Endothelial cell of umbilical vein (primary cell): ENCODE measurements at regions of chr6 and their contacts with region 1.

Region 1: GRCh38 chr6:80457439-80457933 is 351.0 kb downstream of the BCKDHB start:
- DNase-seq: peak; percentile 94
- H3K4me3 ChIP-seq: no peak overlapping the region
- H3K27ac ChIP-seq: no peak overlapping the region
- H3K4me1 ChIP-seq: peaks cover 58% of the 10 kb centered on the region
- H3K27me3 ChIP-seq: no peaks in the 10 kb centered on the region
- CTCF ChIP-seq: peak in 1 of 2 donors; percentile 31
- POLR2A ChIP-seq: no peak

Region 2: GRCh38 chr6:79949233-79949632 is 508.3 kb before region 1 on chr6:
- CTCF ChIA-PET with region 1: no interaction called
- POLR2A ChIA-PET with region 1: no interaction called
- dilution Hi-C with region 1: no loop called
- intact Hi-C with region 1: loop called (anchors 10 kb)
- DNase-seq: peak; percentile 53
- H3K4me3 ChIP-seq: no peak overlapping the region
- H3K27ac ChIP-seq: no peak overlapping the region
- H3K4me1 ChIP-seq: peaks cover 13% of the 10 kb centered on the region
- H3K27me3 ChIP-seq: peaks cover 8 to 31% of the 10 kb centered on the region in 2 experiments
- CTCF ChIP-seq: peak; percentile 41 to 49
- POLR2A ChIP-seq: no peak

Region 3: DNA sequence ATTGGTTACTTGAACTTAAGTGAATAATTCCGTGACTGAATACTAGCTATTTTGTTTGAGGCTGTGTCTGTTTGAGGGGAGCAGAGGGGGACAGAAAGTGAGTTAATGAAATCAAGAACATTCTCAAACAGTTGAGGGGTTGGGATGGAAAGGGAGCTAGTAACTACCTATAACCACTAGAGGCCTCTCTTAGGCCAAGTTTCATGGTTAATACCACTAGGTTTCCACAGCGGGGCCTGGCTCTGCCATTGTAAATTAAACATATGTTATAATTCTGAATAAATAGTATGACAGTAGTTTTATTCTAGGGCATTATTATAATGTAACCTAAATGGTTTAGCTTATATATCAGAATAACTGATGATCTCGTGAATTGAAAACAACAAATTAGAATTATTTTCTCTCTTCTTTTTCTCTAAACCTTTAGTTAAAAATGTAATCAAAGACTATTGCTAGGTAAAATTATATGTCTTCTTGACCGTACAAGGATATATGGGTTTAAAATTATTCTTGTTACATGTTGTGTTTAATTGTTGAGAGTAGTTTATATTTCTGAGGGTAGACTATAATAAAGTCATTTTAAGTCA is 243.0 kb before region 1 on chr6:
- CTCF ChIA-PET with region 1: interaction called, 24 read pairs
- POLR2A ChIA-PET with region 1: no interaction called
- dilution Hi-C with region 1: no loop called
- intact Hi-C with region 1: no loop called
- DNase-seq: peak; percentile 62
- H3K4me3 ChIP-seq: no peak overlapping the region
- H3K27ac ChIP-seq: no peak overlapping the region
- H3K4me1 ChIP-seq: no peaks in the 10 kb centered on the region
- H3K27me3 ChIP-seq: no peaks in the 10 kb centered on the region
- CTCF ChIP-seq: peak; percentile 55 to 74
- POLR2A ChIP-seq: no peak

Region 4: DNA sequence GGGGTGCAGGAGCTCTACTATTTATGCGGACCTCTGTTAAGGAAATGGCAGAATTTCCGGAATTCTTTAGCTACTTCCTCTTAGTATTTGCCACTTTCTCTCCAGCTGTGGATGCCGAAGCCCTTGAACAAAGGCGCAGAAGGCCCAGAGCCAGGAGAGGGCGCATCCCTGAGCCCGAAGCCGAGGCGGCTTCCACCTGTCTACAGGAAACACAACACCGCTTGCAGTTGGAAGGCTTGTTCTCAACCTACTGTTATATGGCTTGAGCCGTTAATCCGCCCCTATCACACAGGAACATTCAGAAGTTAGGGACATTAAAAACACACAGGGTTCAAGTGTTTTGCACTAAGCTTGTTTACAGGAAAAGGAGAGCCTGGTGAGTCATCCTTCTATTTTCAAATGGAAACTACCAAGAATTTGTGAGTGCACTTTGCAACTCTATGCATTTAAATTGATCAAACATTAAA is 66.1 kb after region 1 on chr6:
- CTCF ChIA-PET with region 1: interaction called, 30 read pairs
- POLR2A ChIA-PET with region 1: no interaction called
- dilution Hi-C with region 1: no loop called
- intact Hi-C with region 1: loop called (anchors 1 kb)
- DNase-seq: peak; percentile 93
- H3K4me3 ChIP-seq: peak overlapping the region in 1 of 3 experiments; percentile 21
- H3K27ac ChIP-seq: peak overlapping the region; percentile 79
- H3K4me1 ChIP-seq: peaks cover 23% of the 10 kb centered on the region
- H3K27me3 ChIP-seq: no peaks in the 10 kb centered on the region
- CTCF ChIP-seq: peak; percentile 61 to 67
- POLR2A ChIP-seq: no peak

Region 5: DNA sequence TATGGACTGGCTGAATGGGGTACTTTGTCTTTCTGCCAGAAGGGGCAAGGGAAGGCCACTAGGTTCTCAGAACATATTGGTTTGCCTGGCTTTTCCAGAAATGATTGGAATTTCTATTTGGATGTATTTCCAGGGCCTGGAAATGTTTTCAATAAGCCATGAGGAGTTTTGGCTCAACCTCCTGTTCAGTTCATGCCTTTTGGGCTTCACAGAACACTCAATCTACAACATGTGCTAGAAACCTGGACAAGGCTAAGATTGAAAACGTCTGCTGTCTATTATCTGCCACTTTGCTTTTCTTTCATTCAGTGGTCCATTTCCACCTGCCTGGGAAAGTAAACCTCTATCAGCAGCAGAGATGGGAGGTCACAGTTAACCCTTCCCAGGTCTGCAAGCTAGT is 501.5 kb after region 1 on chr6:
- CTCF ChIA-PET with region 1: no interaction called
- POLR2A ChIA-PET with region 1: no interaction called
- dilution Hi-C with region 1: no loop called
- intact Hi-C with region 1: loop called (anchors 10 kb)
- DNase-seq: no peak
- H3K4me3 ChIP-seq: no peak overlapping the region
- H3K27ac ChIP-seq: no peak overlapping the region
- H3K4me1 ChIP-seq: peaks cover 17% of the 10 kb centered on the region
- H3K27me3 ChIP-seq: no peaks in the 10 kb centered on the region
- CTCF ChIP-seq: no peak
- POLR2A ChIP-seq: no peak

Region 6: DNA sequence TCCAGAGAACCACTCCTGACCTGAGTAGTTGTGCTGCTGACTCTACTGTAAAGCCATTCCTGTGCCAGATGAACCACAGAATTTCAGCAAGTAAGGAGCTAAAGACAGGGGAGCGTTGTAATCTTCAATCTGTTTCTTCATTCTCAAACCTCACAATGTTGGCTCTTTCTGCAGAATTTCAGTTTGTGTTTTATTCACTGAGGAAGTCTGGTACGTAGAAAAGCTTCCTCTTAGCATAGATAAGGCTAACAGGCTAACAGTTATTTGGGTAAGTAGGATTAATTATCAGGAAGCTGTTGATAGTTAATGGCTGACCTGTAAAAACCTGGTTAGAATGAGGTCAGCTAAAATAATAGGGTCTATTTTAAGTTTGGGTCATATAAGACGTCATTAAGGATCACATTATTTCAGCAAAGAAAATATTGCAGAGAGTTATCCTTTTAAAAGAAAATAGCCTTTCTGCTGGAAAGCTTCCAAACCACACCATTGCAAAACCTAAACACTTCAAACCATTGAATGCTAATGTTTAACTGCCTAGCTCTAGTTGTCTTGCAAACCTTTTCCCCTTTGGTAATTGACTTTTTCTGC is 1309.1 kb after region 1 on chr6:
- CTCF ChIA-PET with region 1: no interaction called
- POLR2A ChIA-PET with region 1: no interaction called
- dilution Hi-C with region 1: no loop called
- intact Hi-C with region 1: loop called (anchors 1 kb)
- DNase-seq: peak; percentile 92
- H3K4me3 ChIP-seq: no peak overlapping the region
- H3K27ac ChIP-seq: no peak overlapping the region
- H3K4me1 ChIP-seq: peaks cover 12% of the 10 kb centered on the region
- H3K27me3 ChIP-seq: peaks cover 28 to 46% of the 10 kb centered on the region in 2 experiments
- CTCF ChIP-seq: no peak
- POLR2A ChIP-seq: no peak